ENCODE measurements at regions of chr12 and their contacts with region 1.

Region 1: DNA sequence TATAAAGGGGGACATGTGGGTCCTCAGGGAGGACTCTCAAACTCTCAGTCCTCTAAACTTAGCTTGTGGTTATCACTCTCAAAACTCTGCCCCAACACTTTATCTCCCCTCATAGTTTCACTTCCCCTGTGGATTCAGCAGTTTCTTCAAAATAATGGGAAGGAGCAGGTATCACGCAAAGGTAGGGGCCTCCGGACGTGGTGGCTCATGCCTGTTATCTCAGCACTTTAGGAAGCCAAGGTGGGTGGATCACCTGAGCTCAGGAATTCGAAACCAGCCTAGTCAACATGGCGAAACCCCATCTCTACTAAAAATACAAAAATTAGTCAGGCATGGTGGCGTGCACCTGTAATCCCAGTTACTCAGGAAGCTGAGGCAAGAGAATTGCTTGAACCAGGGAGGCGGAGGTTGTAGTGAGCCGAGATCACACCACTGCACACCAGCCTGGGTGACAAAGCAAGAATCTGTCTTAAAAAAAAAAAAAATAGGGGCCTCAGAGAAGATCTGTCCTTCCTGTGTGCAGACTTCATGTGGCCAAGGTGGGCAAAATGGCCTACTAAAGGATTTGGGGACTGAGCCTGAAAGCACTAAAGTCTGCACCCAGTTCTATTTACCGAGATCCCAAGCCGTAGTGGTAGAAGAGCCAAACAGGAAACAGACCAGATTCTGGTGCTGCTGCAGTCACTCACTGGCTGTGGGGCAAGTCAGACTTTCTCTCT is 6.4 kb downstream of the ITGB7 start:
- DNase-seq: no peak
- H3K4me3 ChIP-seq: no peak overlapping the region
- H3K27me3 ChIP-seq: no peaks in the 10 kb centered on the region
- CTCF ChIP-seq: no peak

Region 2: GRCh38 chr12:53180220-53180930 is 20.2 kb before region 1 on chr12 and contains the starts of genes CSAD and ZNF740:
- CTCF ChIA-PET with region 1: interaction called, 17 read pairs
- POLR2A ChIA-PET with region 1: interaction called, 3 read pairs
- DNase-seq: peak; percentile 83
- H3K4me3 ChIP-seq: peak within 1 kb of the TSS; percentile 86
- H3K27me3 ChIP-seq: no peaks in the 10 kb centered on the region
- CTCF ChIP-seq: no peak
- polyA plus RNA-seq, gene CSAD: 27.3 and 30.7 TPM in 2 replicates
- polyA plus RNA-seq, gene ZNF740: 15.7 and 16.8 TPM in 2 replicates

Region 3: GRCh38 chr12:53190108-53190729 is 10.4 kb before region 1 on chr12:
- CTCF ChIA-PET with region 1: interaction called, 18 read pairs
- POLR2A ChIA-PET with region 1: no interaction called
- DNase-seq: no peak
- H3K4me3 ChIP-seq: no peak overlapping the region
- H3K27me3 ChIP-seq: no peaks in the 10 kb centered on the region
- CTCF ChIP-seq: peak; percentile 93

Region 4: GRCh38 chr12:53431187-53431586 is 230.6 kb after region 1 on chr12:
- CTCF ChIA-PET with region 1: no interaction called
- POLR2A ChIA-PET with region 1: no interaction called
- DNase-seq: no peak
- H3K4me3 ChIP-seq: no peak overlapping the region
- H3K27me3 ChIP-seq: no peaks in the 10 kb centered on the region
- CTCF ChIP-seq: no peak